ENCODE measurements at regions of chr13 and their contacts with region 1.

Region 1: GRCh38 chr13:108895220-108895704 is 265.9 kb downstream of the MYO16 start:
- DNase-seq: peak; percentile 12
- H3K4me3 Mint-ChIP-seq: no peak overlapping the region
- H3K27ac Mint-ChIP-seq: no peak overlapping the region
- H3K4me1 Mint-ChIP-seq: peaks cover 8% of the 10 kb centered on the region
- H3K27me3 Mint-ChIP-seq: no peaks in the 10 kb centered on the region
- CTCF ChIP-seq: no peak

Region 2: GRCh38 chr13:108227651-108228272 is 667.5 kb before region 1 on chr13:
- CTCF ChIA-PET with region 1: no interaction called
- intact Hi-C with region 1: loop called (anchors 10 kb)
- DNase-seq: peak; percentile 4
- H3K4me3 Mint-ChIP-seq: no peak overlapping the region
- H3K27ac Mint-ChIP-seq: no peak overlapping the region
- H3K4me1 Mint-ChIP-seq: peaks cover 9% of the 10 kb centered on the region
- H3K27me3 Mint-ChIP-seq: no peaks in the 10 kb centered on the region
- CTCF ChIP-seq: no peak

Region 3: DNA sequence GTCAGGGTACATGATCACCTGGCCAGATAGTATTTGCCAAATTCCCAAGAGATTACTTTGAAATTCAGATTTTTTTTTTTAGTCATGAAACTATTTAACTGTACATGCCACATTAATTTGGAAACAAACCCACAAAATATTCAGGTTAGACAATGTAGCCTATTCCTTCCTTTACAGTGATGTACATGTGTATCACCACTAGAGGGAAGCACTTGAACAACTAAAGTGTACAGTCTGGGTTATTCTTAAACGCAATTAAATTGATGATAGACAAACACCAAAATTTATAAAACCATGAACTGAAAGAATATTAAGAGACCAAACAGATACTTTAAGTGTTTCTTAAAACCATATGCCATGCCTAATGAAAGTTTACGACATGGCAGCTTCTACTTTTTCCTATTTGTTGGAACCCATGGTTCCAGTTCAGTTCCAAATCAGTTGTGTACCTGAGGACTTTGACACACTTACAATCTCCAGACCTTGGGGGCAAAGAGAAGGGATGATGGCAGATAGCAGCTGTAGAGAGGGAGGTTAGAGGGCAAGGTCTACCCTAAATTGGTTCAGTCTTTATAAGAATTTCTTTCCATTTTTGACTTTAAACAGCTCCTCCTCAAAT is 572.9 kb before region 1 on chr13:
- CTCF ChIA-PET with region 1: no interaction called
- intact Hi-C with region 1: loop called (anchors 5 kb)
- DNase-seq: no peak
- H3K4me3 Mint-ChIP-seq: no peak overlapping the region
- H3K27ac Mint-ChIP-seq: no peak overlapping the region
- H3K4me1 Mint-ChIP-seq: no peaks in the 10 kb centered on the region
- H3K27me3 Mint-ChIP-seq: no peaks in the 10 kb centered on the region
- CTCF ChIP-seq: no peak

Region 4: DNA sequence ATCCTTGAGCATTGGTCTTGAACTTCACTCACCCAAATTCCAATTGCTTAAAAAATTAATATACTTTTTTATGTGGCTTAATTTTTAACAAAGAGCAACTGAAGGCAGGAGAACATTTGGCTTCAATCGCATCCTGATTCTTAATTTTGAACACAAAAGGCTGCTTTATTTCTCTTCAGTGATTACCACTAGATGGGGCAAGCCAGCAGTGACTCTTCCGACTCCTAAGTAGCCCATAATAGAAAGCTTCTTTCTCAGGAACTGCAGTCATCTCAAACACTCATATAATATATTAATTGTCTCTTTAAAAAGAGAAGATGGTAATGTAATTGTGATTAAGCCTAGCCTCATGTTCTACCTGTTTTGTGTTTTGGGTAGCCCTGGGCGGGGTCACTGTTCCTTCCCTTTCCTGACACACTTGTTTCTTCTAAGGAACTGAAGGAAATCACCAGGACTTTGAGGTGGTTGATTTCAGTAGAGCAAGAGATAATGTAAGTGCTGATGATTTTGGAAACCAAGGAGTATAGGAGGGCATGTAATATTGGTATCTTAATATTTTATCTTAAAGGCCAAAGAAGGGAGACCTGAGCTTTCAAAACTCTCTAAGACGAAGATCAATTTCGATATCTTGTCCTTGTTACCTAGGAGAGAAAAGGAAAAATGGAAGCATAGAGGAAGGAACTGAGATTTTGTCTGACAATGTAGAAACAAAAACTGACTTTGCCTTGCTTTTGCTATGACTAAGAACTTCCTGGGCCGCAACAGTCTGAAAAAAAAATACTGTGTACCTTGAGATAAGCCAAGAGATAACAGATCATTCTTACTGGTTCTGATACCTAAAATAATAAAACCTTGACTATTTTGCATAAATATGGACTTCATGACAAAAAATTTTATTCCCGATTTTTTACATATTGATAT is 552.6 kb before region 1 on chr13:
- CTCF ChIA-PET with region 1: no interaction called
- intact Hi-C with region 1: loop called (anchors 5 kb)
- DNase-seq: no peak
- H3K4me3 Mint-ChIP-seq: no peak overlapping the region
- H3K27ac Mint-ChIP-seq: no peak overlapping the region
- H3K4me1 Mint-ChIP-seq: peaks cover 10% of the 10 kb centered on the region
- H3K27me3 Mint-ChIP-seq: no peaks in the 10 kb centered on the region
- CTCF ChIP-seq: no peak

Region 5: DNA sequence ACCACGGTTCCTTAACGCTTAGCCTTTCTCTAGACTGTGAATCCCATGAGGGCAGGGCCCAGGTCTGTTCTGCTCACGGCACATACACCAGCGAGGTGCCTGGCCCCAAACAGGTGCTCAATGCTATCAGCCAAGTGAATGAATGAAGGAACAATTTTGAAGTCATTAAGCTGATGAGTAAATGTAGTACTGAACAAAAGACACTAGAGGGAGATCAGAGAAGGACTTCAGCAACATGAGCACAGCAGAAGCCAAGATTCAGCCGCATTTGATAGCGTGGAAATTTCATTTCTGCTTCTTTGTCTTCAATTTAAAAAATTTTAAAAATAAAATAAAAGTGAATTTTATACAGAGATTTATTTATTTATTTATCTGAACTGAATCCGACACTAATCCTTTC is 285.9 kb before region 1 on chr13:
- CTCF ChIA-PET with region 1: interaction called, 13 read pairs
- intact Hi-C with region 1: loop called (anchors 1 kb)
- DNase-seq: no peak
- H3K4me3 Mint-ChIP-seq: no peak overlapping the region
- H3K27ac Mint-ChIP-seq: no peak overlapping the region
- H3K4me1 Mint-ChIP-seq: no peaks in the 10 kb centered on the region
- H3K27me3 Mint-ChIP-seq: no peaks in the 10 kb centered on the region
- CTCF ChIP-seq: no peak

Region 6: GRCh38 chr13:108816381-108816780 is 78.9 kb before region 1 on chr13:
- CTCF ChIA-PET with region 1: no interaction called
- intact Hi-C with region 1: loop called (anchors 10 kb)
- DNase-seq: peak; percentile 23
- H3K4me3 Mint-ChIP-seq: no peak overlapping the region
- H3K27ac Mint-ChIP-seq: no peak overlapping the region
- H3K4me1 Mint-ChIP-seq: peaks cover 36% of the 10 kb centered on the region
- H3K27me3 Mint-ChIP-seq: no peaks in the 10 kb centered on the region
- CTCF ChIP-seq: no peak

Region 7: GRCh38 chr13:108850691-108851090 is 44.6 kb before region 1 on chr13:
- CTCF ChIA-PET with region 1: no interaction called
- intact Hi-C with region 1: no loop called
- DNase-seq: no peak
- H3K4me3 Mint-ChIP-seq: no peak overlapping the region
- H3K27ac Mint-ChIP-seq: no peak overlapping the region
- H3K4me1 Mint-ChIP-seq: no peaks in the 10 kb centered on the region
- H3K27me3 Mint-ChIP-seq: no peaks in the 10 kb centered on the region
- CTCF ChIP-seq: no peak